Transverse colon (tissue), 4 donors: ENCODE measurements at regions of chr2 and their contacts with region 1.

Region 1: DNA sequence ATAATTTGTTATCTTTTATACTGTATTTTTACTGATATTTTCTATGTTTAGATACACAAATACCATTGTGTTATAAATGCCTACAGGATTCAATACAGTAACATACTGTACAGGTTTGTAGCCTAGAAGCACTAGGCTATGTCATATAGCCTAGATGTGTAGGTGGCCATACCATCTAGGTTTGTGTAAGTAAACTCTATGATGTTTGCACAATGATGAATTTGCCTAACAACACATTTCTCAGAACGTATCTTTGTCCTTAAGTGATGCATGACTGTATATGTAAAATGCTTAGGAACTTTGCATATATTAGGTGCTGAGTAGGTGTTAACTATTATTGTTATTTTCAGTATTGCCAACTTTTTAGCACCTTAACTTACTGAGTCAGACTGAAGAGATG is 17.3 kb downstream of the UNC80 start:
- DNase-seq: no peak
- H3K4me3 ChIP-seq: no peak overlapping the region
- H3K27ac ChIP-seq: no peak overlapping the region
- H3K4me1 ChIP-seq: no peaks in the 10 kb centered on the region
- H3K27me3 ChIP-seq: no peaks in the 10 kb centered on the region
- CTCF ChIP-seq: no peak
- EP300 ChIP-seq: no peak
- POLR2A ChIP-seq: no peak

Region 2: GRCh38 chr2:209730084-209730483 is 58.8 kb before region 1 on chr2:
- in situ Hi-C with region 1: no loop called
- intact Hi-C with region 1: loop called (anchors 2 kb)
- DNase-seq: no peak
- H3K4me3 ChIP-seq: no peak overlapping the region
- H3K27ac ChIP-seq: no peak overlapping the region
- H3K4me1 ChIP-seq: no peaks in the 10 kb centered on the region
- H3K27me3 ChIP-seq: no peaks in the 10 kb centered on the region
- CTCF ChIP-seq: no peak
- EP300 ChIP-seq: no peak
- POLR2A ChIP-seq: no peak

Region 3: GRCh38 chr2:209817844-209818271 is 28.9 kb after region 1 on chr2:
- in situ Hi-C with region 1: no loop called
- intact Hi-C with region 1: loop called (anchors 1 kb)
- DNase-seq: no peak
- H3K4me3 ChIP-seq: no peak overlapping the region
- H3K27ac ChIP-seq: no peak overlapping the region
- H3K4me1 ChIP-seq: no peaks in the 10 kb centered on the region
- H3K27me3 ChIP-seq: no peaks in the 10 kb centered on the region
- CTCF ChIP-seq: no peak
- EP300 ChIP-seq: no peak
- POLR2A ChIP-seq: no peak